Panc1 (cell line): ENCODE measurements at regions of chr16 and their contacts with region 1.

Region 1: GRCh38 chr16:25279491-25279890 is 21.8 kb upstream of the ZKSCAN2 start:
- DNase-seq: no peak
- ATAC-seq: peak; percentile 18; the same call in 1 of the 2 replicates
- H3K4me3 ChIP-seq: no peak overlapping the region
- H3K27ac ChIP-seq: no peak overlapping the region
- H3K4me1 ChIP-seq: no peaks in the 10 kb centered on the region
- H3K27me3 ChIP-seq: no peaks in the 10 kb centered on the region
- CTCF ChIP-seq: no peak

Region 2: DNA sequence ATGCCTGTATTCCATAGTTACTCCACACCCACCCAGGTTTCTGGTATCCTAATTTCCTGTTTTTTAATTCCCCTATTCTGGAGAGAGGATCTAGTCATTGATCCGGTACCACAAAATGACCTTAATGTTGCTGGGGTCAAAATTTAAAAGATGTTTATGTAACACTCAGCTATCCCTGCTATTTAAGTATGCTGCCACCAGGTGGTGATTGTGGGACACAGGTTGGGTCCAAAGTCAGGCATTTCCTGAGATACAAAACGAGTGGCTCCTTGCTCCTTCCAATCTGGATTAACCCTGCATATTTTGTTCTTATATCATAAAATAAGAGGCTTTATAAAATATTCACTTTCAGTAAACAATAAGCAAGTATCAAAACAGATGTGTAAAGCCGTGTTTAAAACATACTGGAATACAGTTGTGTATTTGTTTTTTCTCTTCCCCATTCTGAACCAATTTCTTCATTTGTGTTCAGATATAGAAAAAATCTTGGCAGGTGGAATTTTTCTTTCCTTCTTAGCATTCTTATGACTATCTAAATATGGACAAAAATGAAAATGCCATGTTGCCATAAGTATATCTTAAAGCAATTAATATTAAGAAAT is 428.6 kb after region 1 on chr16:
- CTCF ChIA-PET with region 1: no interaction called
- POLR2A ChIA-PET with region 1: no interaction called
- in situ Hi-C with region 1: no loop called
- intact Hi-C with region 1: loop called (anchors 5 kb)
- DNase-seq: no peak
- ATAC-seq: no peak
- H3K4me3 ChIP-seq: no peak overlapping the region
- H3K27ac ChIP-seq: no peak overlapping the region
- H3K4me1 ChIP-seq: no peaks in the 10 kb centered on the region
- H3K27me3 ChIP-seq: peaks cover 16% of the 10 kb centered on the region
- CTCF ChIP-seq: peak; percentile 79